ENCODE measurements at regions of chr2 and their contacts with region 1.

Region 1: DNA sequence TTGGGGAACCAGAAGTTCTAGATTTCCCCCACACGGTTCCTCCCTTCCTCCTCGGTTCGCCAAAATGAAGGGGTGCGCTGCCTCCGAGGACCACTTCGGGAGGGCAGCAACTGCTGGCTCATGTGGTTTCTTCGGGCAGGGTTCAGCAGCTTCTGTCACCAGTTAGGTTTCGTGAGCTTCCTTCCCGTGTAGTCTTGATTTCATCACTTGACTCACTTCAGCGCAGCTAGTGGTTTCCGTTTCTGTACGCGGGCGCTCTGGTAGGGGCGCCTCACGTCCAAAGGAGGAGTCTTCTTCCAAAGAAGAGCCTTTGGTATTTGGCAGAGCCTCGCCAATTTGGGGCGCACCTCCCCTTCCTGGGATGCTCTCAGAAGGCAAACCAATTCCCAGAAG is 485 bp upstream of the GALNT3 start:
- DNase-seq: peak in 1 of 2 donors; percentile 59
- H3K4me3 ChIP-seq: peak overlapping the region; percentile 33 to 72 (median 63)
- H3K27ac ChIP-seq: peak overlapping the region; percentile 86 to 92 (median 89)
- H3K4me1 ChIP-seq: peaks cover 0 to 20% of the 10 kb centered on the region in 2 donors
- H3K27me3 ChIP-seq: no peaks in the 10 kb centered on the region
- CTCF ChIP-seq: no peak
- POLR2A ChIP-seq: no peak

Region 2: GRCh38 chr2:165173215-165173614 is 621.3 kb before region 1 on chr2:
- intact Hi-C with region 1: no loop called
- DNase-seq: no peak
- H3K4me3 ChIP-seq: no peak overlapping the region
- H3K27ac ChIP-seq: no peak overlapping the region
- H3K4me1 ChIP-seq: no peaks in the 10 kb centered on the region
- H3K27me3 ChIP-seq: no peaks in the 10 kb centered on the region
- CTCF ChIP-seq: no peak
- POLR2A ChIP-seq: no peak

Region 3: GRCh38 chr2:165743442-165743841 is 51.1 kb before region 1 on chr2:
- intact Hi-C with region 1: loop called (anchors 10 kb)
- DNase-seq: no peak
- H3K4me3 ChIP-seq: no peak overlapping the region
- H3K27ac ChIP-seq: no peak overlapping the region
- H3K4me1 ChIP-seq: peaks cover 13 to 15% of the 10 kb centered on the region in 2 donors
- H3K27me3 ChIP-seq: no peaks in the 10 kb centered on the region
- CTCF ChIP-seq: no peak
- POLR2A ChIP-seq: no peak

Measured in thyroid gland (tissue), 4 donors.